MCF 10A (cell line): ENCODE measurements at regions of chr5 and their contacts with region 1.

Region 1: GRCh38 chr5:932628-933250 is 40.1 kb downstream of the TRIP13 start:
- DNase-seq: no peak
- H3K4me3 Mint-ChIP-seq: no peak overlapping the region
- H3K27ac Mint-ChIP-seq: no peak overlapping the region
- H3K4me1 Mint-ChIP-seq: no peaks in the 10 kb centered on the region
- H3K27me3 Mint-ChIP-seq: peaks cover 45% of the 10 kb centered on the region
- CTCF ChIP-seq: no peak

Region 2: DNA sequence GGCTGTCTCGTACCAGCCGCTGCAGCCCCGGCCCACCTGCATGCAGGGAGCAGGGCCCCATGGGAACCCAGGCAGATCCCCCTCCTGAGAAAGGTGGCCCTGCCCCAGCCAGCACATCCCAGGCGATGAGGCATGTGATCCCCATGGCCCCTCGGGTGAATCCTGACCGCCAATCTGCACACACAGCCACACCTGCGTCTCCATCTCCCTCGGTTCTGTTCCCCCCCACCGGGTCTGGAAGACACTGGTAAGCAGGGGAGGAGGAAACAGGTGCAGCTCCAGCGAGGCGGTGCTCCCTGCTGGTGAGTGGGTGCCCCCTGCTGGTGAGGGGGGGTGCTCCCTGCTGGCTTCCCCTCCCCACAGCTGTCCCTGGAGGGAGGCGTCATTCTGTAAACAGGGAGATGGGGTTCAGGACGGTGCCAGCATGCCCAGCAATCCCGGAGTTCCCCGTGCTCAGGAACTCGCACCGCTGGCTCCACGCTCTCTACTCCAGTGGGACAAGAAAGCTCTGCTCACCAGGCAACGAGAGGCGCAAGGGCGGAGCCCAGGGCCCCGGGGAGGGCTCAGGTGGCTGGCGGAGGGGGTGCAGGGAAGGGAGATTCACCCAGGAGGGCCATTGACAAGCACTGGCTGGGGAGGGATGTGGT is 207.6 kb after region 1 on chr5:
- CTCF ChIA-PET with region 1: interaction called, 6 read pairs
- POLR2A ChIA-PET with region 1: interaction called, 3 read pairs
- intact Hi-C with region 1: loop called (anchors 1 kb)
- DNase-seq: peak; percentile 67
- H3K4me3 Mint-ChIP-seq: no peak overlapping the region
- H3K27ac Mint-ChIP-seq: no peak overlapping the region
- H3K4me1 Mint-ChIP-seq: no peaks in the 10 kb centered on the region
- H3K27me3 Mint-ChIP-seq: peaks cover 19% of the 10 kb centered on the region
- CTCF ChIP-seq: peak; percentile 62

Region 3: DNA sequence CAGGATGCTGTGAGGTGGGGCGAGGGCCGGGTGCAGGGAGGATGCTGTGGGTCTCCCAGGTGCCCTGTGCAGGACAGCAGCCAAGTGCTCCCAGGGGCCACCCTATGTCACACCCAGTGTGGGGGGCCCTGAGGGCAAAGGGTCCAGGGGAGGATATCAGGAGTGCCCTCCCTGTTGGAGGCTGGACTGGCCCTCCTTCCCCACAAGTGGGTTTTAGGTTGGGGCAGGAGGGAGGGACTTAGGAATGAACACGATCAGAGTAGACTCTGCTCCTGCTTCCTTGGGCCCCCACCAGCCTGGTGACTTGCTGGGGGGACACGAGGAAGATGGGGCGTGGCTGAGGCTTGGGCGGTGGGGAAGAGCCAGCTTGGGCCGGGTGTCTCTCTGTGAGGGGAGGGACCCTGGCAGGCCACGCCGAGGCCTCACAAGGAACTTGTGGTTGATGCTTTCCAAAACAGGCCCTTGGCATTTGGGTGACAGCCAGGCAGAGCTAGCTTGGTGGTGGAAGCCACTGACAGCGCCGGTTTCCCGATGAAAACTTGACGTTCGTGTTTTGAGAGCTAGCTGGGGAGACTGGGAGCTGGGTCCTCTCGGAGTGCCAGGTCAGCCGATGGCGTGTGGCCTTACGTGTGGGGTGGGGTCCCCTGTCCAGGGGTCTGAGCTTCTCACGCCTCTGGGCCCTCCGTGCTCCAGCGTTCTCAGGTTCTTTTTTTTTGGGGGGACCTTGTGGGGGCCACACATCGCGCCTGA is 720.0 kb after region 1 on chr5:
- CTCF ChIA-PET with region 1: no interaction called
- POLR2A ChIA-PET with region 1: no interaction called
- intact Hi-C with region 1: loop called (anchors 5 kb)
- DNase-seq: no peak
- H3K4me3 Mint-ChIP-seq: peak overlapping the region; percentile 12
- H3K27ac Mint-ChIP-seq: no peak overlapping the region
- H3K4me1 Mint-ChIP-seq: no peaks in the 10 kb centered on the region
- H3K27me3 Mint-ChIP-seq: peaks cover 67% of the 10 kb centered on the region
- CTCF ChIP-seq: no peak